ENCODE measurements at regions of chr7 and their contacts with region 1.

Region 1: GRCh38 chr7:97845622-97846203 is 26.5 kb downstream of the ASNS start:
- DNase-seq: peak; percentile 20
- ATAC-seq: no peak
- H3K4me3 ChIP-seq: no peak overlapping the region
- H3K4me3 Mint-ChIP-seq: no peak overlapping the region
- H3K27ac ChIP-seq: no peak overlapping the region
- H3K27ac Mint-ChIP-seq: no peak overlapping the region
- H3K4me1 ChIP-seq: no peaks in the 10 kb centered on the region
- H3K4me1 Mint-ChIP-seq: no peaks in the 10 kb centered on the region
- H3K27me3 ChIP-seq: no peaks in the 10 kb centered on the region
- H3K27me3 Mint-ChIP-seq: peaks cover 3% of the 10 kb centered on the region
- CTCF ChIP-seq: peak; percentile 68

Region 2: GRCh38 chr7:97179454-97180104 is 666.1 kb before region 1 on chr7:
- CTCF ChIA-PET with region 1: no interaction called
- POLR2A ChIA-PET with region 1: no interaction called
- intact Hi-C with region 1: loop called (anchors 10 kb)
- DNase-seq: peak; percentile 66
- ATAC-seq: peak; percentile 51
- H3K4me3 ChIP-seq: no peak overlapping the region
- H3K4me3 Mint-ChIP-seq: no peak overlapping the region
- H3K27ac ChIP-seq: no peak overlapping the region
- H3K27ac Mint-ChIP-seq: no peak overlapping the region
- H3K4me1 ChIP-seq: no peaks in the 10 kb centered on the region
- H3K4me1 Mint-ChIP-seq: peaks cover 4% of the 10 kb centered on the region
- H3K27me3 ChIP-seq: no peaks in the 10 kb centered on the region
- H3K27me3 Mint-ChIP-seq: no peaks in the 10 kb centered on the region
- CTCF ChIP-seq: peak; percentile 86

Region 3: GRCh38 chr7:99290980-99291607 is 1445.4 kb after region 1 on chr7:
- CTCF ChIA-PET with region 1: no interaction called
- POLR2A ChIA-PET with region 1: no interaction called
- intact Hi-C with region 1: no loop called
- DNase-seq: no peak
- ATAC-seq: no peak
- H3K4me3 ChIP-seq: no peak overlapping the region
- H3K4me3 Mint-ChIP-seq: no peak overlapping the region
- H3K27ac ChIP-seq: no peak overlapping the region
- H3K27ac Mint-ChIP-seq: no peak overlapping the region
- H3K4me1 ChIP-seq: no peaks in the 10 kb centered on the region
- H3K4me1 Mint-ChIP-seq: no peaks in the 10 kb centered on the region
- H3K27me3 ChIP-seq: no peaks in the 10 kb centered on the region
- H3K27me3 Mint-ChIP-seq: no peaks in the 10 kb centered on the region
- CTCF ChIP-seq: no peak